Mammary epithelial cell (primary cell): ENCODE measurements at regions of chr7 and their contacts with region 1.

Region 1: GRCh38 chr7:37208528-37208927 is 240.1 kb downstream of the ELMO1 start:
- DNase-seq: peak; percentile 28
- H3K4me3 ChIP-seq: no peak overlapping the region
- H3K27ac ChIP-seq: no peak overlapping the region
- H3K4me1 ChIP-seq: no peaks in the 10 kb centered on the region
- H3K27me3 ChIP-seq: no peaks in the 10 kb centered on the region
- CTCF ChIP-seq: peak; percentile 23 to 50

Region 2: DNA sequence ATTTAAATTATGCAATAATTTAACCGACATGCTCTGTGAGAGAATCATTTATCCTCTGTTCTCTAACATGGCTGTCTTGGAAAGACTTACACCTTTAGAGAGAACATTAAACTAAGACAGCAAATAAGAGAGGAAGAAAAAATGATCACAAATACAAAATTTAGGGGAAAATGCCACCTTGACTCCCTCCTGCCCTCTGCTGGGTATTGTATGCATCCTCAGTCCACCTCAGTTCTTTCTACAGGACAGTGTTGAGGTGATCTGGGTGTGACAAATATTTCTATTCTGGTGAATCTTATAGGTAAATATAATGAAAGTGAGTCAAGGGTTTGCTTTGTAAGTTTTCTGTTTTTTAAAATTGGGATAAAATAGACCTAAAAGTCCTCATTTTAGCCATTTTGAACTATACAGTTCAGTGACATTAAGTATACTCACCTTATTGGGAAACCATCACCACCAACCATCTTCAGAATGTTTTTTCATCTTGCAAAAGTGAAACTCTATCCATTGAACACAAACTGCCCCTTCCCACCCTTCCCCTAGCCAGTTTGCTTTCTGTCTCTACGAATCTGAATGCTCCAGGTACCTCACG is 301.6 kb after region 1 on chr7:
- CTCF ChIA-PET with region 1: no interaction called
- dilution Hi-C with region 1: no loop called
- in situ Hi-C with region 1: no loop called
- intact Hi-C with region 1: loop called (anchors 1 kb)
- DNase-seq: no peak
- H3K4me3 ChIP-seq: no peak overlapping the region
- H3K27ac ChIP-seq: no peak overlapping the region
- H3K4me1 ChIP-seq: no peaks in the 10 kb centered on the region
- H3K27me3 ChIP-seq: no peaks in the 10 kb centered on the region
- CTCF ChIP-seq: peak; percentile 60 to 69